AG04449 (cell line): ENCODE measurements at regions of chr18 and their contacts with region 1.

Region 1: GRCh38 chr18:37341016-37341415 is 224.6 kb downstream of the CELF4 start:
- DNase-seq: no peak
- H3K4me3 ChIP-seq: no peak overlapping the region
- CTCF ChIP-seq: no peak

Region 2: DNA sequence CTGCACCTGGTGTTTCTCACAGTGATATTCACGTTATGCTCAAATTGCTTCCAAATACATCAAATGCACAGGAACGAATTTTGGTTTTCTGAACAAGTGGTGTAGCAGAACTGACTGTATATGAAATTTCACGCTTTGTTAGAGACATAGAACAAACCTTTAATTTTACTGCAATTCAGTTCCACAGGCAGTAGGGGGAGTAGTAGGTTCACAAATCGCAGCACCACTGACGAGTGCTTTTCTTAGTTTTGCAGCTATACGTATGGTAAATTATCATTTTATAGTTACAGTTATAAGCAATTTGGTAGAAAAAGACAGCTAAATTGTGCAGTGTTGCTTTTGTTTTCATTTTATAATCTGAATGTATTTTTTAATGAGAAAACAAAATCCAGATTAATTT is 398.8 kb before region 1 on chr18:
- CTCF ChIA-PET with region 1: interaction called, 27 read pairs
- POLR2A ChIA-PET with region 1: no interaction called
- DNase-seq: peak; percentile 1
- H3K4me3 ChIP-seq: no peak overlapping the region
- CTCF ChIP-seq: peak; percentile 54

Region 3: GRCh38 chr18:37322492-37323035 is 18.5 kb before region 1 on chr18:
- CTCF ChIA-PET with region 1: interaction called, 32 read pairs
- POLR2A ChIA-PET with region 1: no interaction called
- DNase-seq: no peak
- H3K4me3 ChIP-seq: no peak overlapping the region
- CTCF ChIP-seq: peak; percentile 84

Region 4: DNA sequence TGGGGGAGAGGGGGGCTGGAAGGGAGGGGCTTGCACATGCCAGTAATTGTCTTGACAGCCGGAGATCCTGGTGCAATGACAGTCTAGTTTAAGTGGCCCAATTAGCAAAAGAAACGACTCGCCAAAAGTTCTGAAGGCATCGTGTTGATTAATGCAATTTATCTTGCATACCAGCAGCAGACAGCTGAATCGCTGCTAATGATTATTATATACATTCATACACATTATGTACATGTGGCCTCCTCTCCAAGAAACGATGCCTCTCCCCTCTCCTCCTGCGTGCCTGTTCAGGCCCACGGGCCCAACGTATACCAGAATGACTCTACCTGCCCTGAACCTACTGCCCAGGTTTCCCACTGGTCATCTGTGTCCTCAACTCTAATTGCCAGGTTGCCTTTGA is 10.1 kb after region 1 on chr18:
- CTCF ChIA-PET with region 1: interaction called, 15 read pairs
- POLR2A ChIA-PET with region 1: no interaction called
- DNase-seq: no peak
- H3K4me3 ChIP-seq: no peak overlapping the region
- CTCF ChIP-seq: no peak

Region 5: GRCh38 chr18:37537868-37538525 is 197.0 kb after region 1 on chr18:
- CTCF ChIA-PET with region 1: interaction called, 49 read pairs
- POLR2A ChIA-PET with region 1: no interaction called
- DNase-seq: no peak
- H3K4me3 ChIP-seq: no peak overlapping the region
- CTCF ChIP-seq: peak; percentile 97